ENCODE measurements at regions of chr2 and their contacts with region 1.

Region 1: DNA sequence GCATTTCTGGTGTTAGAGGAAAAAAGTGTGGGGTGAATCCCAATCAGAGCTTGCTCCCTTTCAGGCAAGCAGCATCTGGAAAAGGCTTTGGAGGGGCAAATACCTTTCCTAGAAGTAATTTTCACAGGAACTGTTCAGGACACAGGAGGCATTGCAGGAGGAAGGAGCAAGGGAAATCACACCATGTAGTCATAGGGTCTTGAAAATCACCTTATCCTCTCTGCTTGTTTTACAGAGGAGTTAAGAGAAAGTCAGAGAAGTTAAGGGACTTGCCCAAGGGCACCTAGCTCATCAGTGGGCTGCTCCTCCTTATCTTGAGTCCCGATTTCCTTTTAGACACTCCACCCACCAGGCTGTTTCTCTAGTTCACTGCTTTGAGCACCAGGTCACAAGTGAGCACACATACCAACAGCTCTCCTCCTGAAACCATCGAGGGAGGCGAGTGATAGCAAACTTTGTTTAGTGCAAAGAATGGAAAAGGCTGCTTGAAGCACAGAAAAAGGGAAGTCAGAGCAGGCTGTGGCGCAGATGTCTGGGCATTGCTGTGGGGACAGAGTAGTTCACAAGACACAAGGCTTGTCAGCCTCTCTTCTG is 89.2 kb upstream of the CXCR4 start:
- DNase-seq: peak; percentile 96
- H3K4me3 ChIP-seq: peak overlapping the region; percentile 58
- H3K27ac ChIP-seq: peak overlapping the region; percentile 97
- H3K4me1 ChIP-seq: peaks cover 66% of the 10 kb centered on the region
- CTCF ChIP-seq: peak; percentile 11; the same call in 1 of the 2 replicates

Region 2: GRCh38 chr2:136107051-136108033 is 99.8 kb before region 1 on chr2:
- CTCF ChIA-PET with region 1: no interaction called
- POLR2A ChIA-PET with region 1: interaction called, 13 read pairs
- intact Hi-C with region 1: no loop called
- DNase-seq: no peak
- H3K4me3 ChIP-seq: peak overlapping the region; percentile 15
- H3K27ac ChIP-seq: peak overlapping the region; percentile 32
- H3K4me1 ChIP-seq: peaks cover 65% of the 10 kb centered on the region
- CTCF ChIP-seq: no peak; the same call in 1 of the 2 replicates

Region 3: GRCh38 chr2:136217996-136218395 is 10.9 kb after region 1 on chr2:
- CTCF ChIA-PET with region 1: interaction called, 7 read pairs
- POLR2A ChIA-PET with region 1: interaction called, 20 read pairs
- intact Hi-C with region 1: no loop called
- DNase-seq: no peak
- H3K4me3 ChIP-seq: no peak overlapping the region
- H3K27ac ChIP-seq: no peak overlapping the region
- H3K4me1 ChIP-seq: peaks cover 47% of the 10 kb centered on the region
- CTCF ChIP-seq: no peak

Region 4: GRCh38 chr2:136255648-136256463 is 48.7 kb after region 1 on chr2:
- CTCF ChIA-PET with region 1: interaction called, 4 read pairs
- POLR2A ChIA-PET with region 1: interaction called, 19 read pairs
- intact Hi-C with region 1: loop called (anchors 1 kb)
- DNase-seq: peak; percentile 85
- H3K4me3 ChIP-seq: peak overlapping the region; percentile 26
- H3K27ac ChIP-seq: peak overlapping the region; percentile 79
- H3K4me1 ChIP-seq: peaks cover 72% of the 10 kb centered on the region
- CTCF ChIP-seq: peak; percentile 80

Region 5: GRCh38 chr2:136378712-136379595 is 171.8 kb after region 1 on chr2:
- CTCF ChIA-PET with region 1: interaction called, 3 read pairs
- POLR2A ChIA-PET with region 1: interaction called, 4 read pairs
- intact Hi-C with region 1: loop called (anchors 1 kb)
- DNase-seq: peak; percentile 91
- H3K4me3 ChIP-seq: no peak overlapping the region
- H3K27ac ChIP-seq: peak overlapping the region; percentile 48
- H3K4me1 ChIP-seq: peaks cover 90% of the 10 kb centered on the region
- CTCF ChIP-seq: peak; percentile 99

Region 6: DNA sequence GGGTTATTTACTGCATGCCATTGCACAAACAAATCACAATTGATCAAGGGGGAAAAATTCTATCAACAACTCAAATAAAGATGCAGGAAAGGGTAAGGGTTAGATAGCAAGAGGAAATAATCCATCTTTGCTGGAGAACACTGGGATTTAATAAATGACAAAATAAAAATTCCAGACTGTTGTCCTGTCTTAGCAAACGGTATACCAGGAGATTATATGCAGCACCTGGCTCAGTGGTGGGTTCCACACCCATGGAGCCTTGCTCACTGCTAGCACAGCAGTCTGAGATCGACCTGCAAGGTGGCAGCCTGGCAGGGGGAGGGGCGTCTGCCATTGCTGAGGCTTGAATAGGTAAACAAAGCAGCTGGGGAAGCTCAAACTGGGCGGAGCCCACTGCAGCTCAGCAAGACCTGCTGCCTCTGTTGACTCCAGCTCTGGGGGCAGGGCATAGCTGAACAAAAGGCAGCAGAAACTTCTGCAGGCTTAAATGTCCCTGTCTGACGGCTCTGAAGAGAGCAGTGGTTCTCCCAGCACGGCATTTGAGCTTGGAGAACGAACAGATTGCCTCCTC is 261.8 kb after region 1 on chr2:
- CTCF ChIA-PET with region 1: no interaction called
- POLR2A ChIA-PET with region 1: no interaction called
- intact Hi-C with region 1: no loop called
- DNase-seq: peak; percentile 8
- H3K4me3 ChIP-seq: no peak overlapping the region
- H3K27ac ChIP-seq: no peak overlapping the region
- H3K4me1 ChIP-seq: no peaks in the 10 kb centered on the region
- CTCF ChIP-seq: no peak

Region 7: DNA sequence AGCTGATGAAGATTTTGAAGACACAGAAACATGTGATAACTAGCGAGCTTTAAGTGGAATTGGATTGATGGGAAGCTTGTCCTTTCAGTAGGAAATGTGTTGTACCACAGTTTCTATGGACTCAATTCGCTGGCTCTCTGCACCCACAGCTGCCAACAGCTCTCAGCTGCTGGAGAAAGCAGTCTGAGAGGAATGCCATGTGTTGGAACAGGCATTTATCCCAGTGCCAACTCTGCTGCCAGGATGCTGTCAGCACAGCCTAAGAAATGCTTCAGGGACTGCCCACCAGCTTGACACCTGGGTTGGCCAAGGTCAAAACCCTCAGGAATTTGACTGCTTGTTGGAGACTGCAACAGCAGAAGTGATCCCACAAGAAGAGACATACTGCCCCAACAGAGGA is 365.2 kb after region 1 on chr2:
- CTCF ChIA-PET with region 1: no interaction called
- POLR2A ChIA-PET with region 1: no interaction called
- intact Hi-C with region 1: no loop called
- DNase-seq: no peak
- H3K4me3 ChIP-seq: no peak overlapping the region
- H3K27ac ChIP-seq: no peak overlapping the region
- H3K4me1 ChIP-seq: no peaks in the 10 kb centered on the region
- CTCF ChIP-seq: no peak